Activated CD8-positive, alpha-beta memory T cell treated with anti-CD3 and anti-CD28 coated beads, Interleukin-2, amount 10 ng/mL, durations not matched to agents 7 days and 5 days (primary cell): ENCODE measurements at regions of chr1 and their contacts with region 1.

Region 1: DNA sequence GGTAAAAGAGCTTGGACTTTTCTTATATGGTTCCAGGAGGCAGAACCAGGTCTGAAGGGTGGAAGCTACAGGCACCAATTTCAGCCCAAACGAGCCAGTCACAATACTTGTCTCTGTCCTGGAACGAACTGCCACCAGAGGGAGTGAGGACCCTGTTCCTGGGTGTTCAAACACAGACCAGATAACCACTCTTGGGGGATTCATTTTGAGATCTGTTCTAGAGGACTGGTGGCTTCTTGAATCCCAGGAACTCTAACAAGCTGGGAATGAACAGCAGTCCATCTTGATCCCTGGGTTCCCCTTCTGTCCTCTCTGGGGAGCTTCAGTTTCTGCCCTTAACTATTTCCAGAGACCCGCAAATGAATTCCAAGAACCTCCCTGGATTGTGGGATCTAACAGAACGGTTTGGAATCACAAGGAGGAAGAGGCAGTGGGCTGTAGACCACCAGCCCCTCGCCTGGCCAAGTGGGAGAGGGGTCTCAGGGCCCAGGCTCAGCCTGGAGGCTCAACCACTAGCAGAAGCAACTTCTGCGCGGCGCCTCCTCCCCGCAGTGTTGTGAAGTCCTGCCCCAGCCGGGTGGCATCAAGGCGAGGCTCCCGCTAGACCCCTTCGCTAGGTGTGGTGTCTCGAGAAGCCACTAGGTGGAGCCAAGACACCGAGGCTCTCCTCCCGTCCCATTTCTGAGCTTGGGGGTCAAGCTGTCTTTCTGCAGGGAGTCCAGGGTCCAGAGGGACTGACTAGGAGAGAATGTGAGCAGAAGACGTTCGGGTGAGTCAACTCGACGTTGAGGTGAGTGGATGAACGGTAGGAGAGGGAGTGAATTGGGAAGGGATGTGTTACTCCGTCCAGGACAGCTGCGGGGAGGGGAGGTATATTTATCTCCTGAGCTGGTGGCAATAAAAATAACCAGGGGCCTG is 12.1 kb upstream of the NES start:
- DNase-seq: peak; percentile 83
- ATAC-seq: peak; percentile 94
- H3K4me3 Mint-ChIP-seq: no peak overlapping the region
- H3K27ac Mint-ChIP-seq: no peak overlapping the region
- H3K4me1 Mint-ChIP-seq: peaks cover 29% of the 10 kb centered on the region
- H3K27me3 Mint-ChIP-seq: peaks cover 67% of the 10 kb centered on the region

Region 2: GRCh38 chr1:156625436-156626078 is 63.7 kb before region 1 on chr1:
- CTCF ChIA-PET with region 1: interaction called, 170 read pairs
- DNase-seq: peak; percentile 64
- ATAC-seq: peak; percentile 64
- H3K4me3 Mint-ChIP-seq: no peak overlapping the region
- H3K27ac Mint-ChIP-seq: no peak overlapping the region
- H3K4me1 Mint-ChIP-seq: peaks cover 8% of the 10 kb centered on the region
- H3K27me3 Mint-ChIP-seq: peaks cover 68% of the 10 kb centered on the region

Region 3: DNA sequence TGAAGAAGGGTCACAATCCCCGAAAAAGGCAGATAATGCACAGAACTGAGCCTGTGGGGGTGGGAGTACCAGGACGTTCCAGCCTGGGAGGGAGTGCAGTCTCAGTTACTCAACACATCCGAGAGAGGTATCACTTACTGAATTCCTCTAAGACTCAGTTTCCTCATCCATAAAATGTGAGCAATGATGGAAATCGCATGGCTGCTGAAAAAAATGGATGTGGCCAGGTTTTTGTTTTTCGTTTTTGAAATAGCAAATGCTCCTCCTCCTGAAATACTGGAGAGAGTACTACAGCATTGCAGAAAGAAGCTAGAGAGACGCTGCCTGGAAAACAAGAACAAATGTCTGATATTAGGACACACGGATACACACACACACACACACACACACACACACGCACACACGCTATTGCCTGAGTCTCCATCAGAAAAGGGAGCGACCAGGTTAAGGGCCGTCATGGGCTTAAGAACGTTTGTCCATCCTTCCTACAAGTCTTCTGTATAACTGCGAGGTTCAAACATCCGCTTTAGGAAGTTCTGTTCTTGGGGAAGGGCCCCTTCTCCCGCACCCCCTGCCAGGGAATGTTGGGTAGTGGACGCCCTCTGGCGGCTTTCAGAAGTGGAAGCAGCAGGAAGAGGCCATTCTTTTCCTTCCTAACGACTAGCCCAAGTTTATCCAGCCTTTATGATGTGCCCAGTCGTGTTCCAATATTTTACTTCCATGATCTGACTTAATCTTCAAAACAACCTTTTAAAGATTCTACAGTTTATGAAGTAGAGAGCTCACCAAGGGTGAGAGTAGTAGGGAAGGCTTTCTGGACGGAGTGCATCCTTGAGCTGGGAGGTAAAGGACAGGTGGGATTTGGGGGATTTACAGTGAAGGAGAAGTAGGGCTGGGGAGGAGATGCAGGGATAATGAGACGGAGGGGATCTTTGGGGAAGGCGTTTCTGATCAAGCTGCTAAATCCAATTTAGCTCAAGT is 11.4 kb before region 1 on chr1:
- CTCF ChIA-PET with region 1: interaction called, 82 read pairs
- DNase-seq: no peak
- ATAC-seq: peak; percentile 31
- H3K4me3 Mint-ChIP-seq: no peak overlapping the region
- H3K27ac Mint-ChIP-seq: no peak overlapping the region
- H3K4me1 Mint-ChIP-seq: peaks cover 7% of the 10 kb centered on the region
- H3K27me3 Mint-ChIP-seq: peaks cover 88% of the 10 kb centered on the region

Region 4: DNA sequence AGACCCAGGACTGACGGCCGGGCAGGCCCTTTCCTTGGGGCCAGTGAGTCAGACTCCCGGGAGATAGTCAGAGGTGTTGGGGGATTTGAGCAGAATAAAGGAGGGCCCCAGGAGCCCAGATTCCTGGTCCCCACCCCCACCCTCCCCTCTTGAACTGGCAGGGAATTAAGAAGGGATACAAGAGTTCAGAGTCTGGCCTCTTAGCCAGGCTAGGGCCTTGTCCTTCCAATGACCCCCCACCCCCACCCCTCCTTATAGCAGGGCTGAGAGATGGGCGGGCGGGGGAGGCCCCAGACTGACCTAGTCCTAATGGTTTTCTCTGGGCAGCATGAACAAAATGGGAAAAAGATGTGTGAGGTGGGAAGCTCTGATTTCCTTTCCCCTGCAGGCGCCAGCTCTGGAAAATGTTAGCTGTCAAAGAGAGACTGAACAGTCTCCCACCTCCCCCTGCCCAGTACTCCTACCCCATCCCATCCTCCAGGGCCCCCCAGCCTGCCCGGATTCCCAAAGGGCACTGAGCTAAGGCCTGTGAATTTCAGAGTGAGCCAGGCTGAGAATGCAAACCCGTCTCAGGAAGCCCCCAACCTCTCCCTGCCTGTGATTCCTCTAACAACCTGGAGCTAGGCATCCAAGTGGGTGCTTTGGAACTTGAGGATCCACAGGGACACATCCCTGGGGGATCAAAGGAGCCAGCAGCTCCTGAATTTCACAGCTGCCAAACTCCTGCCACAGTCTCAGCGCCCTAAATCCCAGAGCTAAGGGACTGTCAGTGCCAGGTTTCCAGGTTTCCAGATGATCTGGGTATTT is 21.9 kb after region 1 on chr1:
- CTCF ChIA-PET with region 1: interaction called, 286 read pairs
- DNase-seq: no peak
- ATAC-seq: no peak
- H3K4me3 Mint-ChIP-seq: no peak overlapping the region
- H3K27ac Mint-ChIP-seq: no peak overlapping the region
- H3K4me1 Mint-ChIP-seq: peaks cover 10% of the 10 kb centered on the region
- H3K27me3 Mint-ChIP-seq: peaks cover 8% of the 10 kb centered on the region

Region 5: GRCh38 chr1:156838981-156839410 is 149.7 kb after region 1 on chr1:
- CTCF ChIA-PET with region 1: interaction called, 10 read pairs
- DNase-seq: peak; percentile 66
- ATAC-seq: peak; percentile 60
- H3K4me3 Mint-ChIP-seq: no peak overlapping the region
- H3K27ac Mint-ChIP-seq: no peak overlapping the region
- H3K4me1 Mint-ChIP-seq: peaks cover 37% of the 10 kb centered on the region
- H3K27me3 Mint-ChIP-seq: peaks cover 28% of the 10 kb centered on the region

Region 6: DNA sequence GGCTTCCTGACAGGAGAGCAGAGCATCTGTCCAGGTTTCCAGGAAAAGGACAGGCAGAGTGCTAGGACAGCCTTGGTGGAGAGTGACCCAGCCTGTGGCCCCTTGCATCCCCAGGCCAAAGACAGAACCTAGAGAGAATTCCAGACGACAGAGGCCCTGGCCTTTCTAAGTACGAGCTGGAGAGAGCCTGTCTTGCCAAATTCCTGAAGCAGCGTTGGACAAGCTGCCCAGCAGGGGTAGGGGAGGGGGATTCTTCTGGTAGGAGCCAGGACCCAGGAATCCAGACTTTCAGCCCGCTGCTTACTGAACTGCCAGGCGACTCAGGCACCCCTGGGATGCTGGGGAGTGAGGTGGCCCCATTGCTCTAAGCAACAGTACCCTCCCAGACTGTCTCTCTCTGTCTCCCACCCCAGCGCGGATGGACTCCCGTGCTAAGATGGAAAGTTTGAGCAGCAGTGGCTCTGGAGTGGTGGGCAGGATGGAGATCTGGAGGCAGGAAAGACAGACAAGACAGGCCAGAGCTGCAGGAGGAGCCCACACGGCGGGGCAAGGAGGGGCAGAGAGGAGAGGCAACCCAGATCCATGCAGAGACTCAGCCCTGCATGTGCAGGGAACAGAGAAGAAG is 195.4 kb after region 1 on chr1:
- CTCF ChIA-PET with region 1: interaction called, 47 read pairs
- DNase-seq: no peak
- ATAC-seq: no peak
- H3K4me3 Mint-ChIP-seq: no peak overlapping the region
- H3K27ac Mint-ChIP-seq: no peak overlapping the region
- H3K4me1 Mint-ChIP-seq: peaks cover under 1% of the 10 kb centered on the region
- H3K27me3 Mint-ChIP-seq: peaks cover 38% of the 10 kb centered on the region

Region 7: GRCh38 chr1:156927215-156928042 is 238.1 kb after region 1 on chr1:
- CTCF ChIA-PET with region 1: interaction called, 14 read pairs
- DNase-seq: peak; percentile 75
- ATAC-seq: peak; percentile 79
- H3K4me3 Mint-ChIP-seq: no peak overlapping the region
- H3K27ac Mint-ChIP-seq: no peak overlapping the region
- H3K4me1 Mint-ChIP-seq: peaks cover 33% of the 10 kb centered on the region
- H3K27me3 Mint-ChIP-seq: peaks cover 95% of the 10 kb centered on the region